ENCODE measurements at regions of chr18 and their contacts with region 1.

Region 1: GRCh38 chr18:12639990-12640880 is 17.7 kb downstream of the SPIRE1 start:
- DNase-seq: peak; percentile 79
- H3K4me3 ChIP-seq: no peak overlapping the region
- H3K27ac ChIP-seq: peak overlapping the region; percentile 74
- H3K4me1 ChIP-seq: peaks cover 38% of the 10 kb centered on the region
- H3K27me3 ChIP-seq: no peaks in the 10 kb centered on the region
- CTCF ChIP-seq: peak in 1 of 2 donors; percentile 17

Region 2: GRCh38 chr18:12597775-12598174 is 42.5 kb before region 1 on chr18:
- CTCF ChIA-PET with region 1: no interaction called
- dilution Hi-C with region 1: no loop called
- in situ Hi-C with region 1: no loop called
- intact Hi-C with region 1: loop called (anchors 2 kb)
- DNase-seq: peak; percentile 83
- H3K4me3 ChIP-seq: no peak overlapping the region
- H3K27ac ChIP-seq: peak overlapping the region; percentile 76
- H3K4me1 ChIP-seq: peaks cover 41% of the 10 kb centered on the region
- H3K27me3 ChIP-seq: no peaks in the 10 kb centered on the region
- CTCF ChIP-seq: no peak

Region 3: DNA sequence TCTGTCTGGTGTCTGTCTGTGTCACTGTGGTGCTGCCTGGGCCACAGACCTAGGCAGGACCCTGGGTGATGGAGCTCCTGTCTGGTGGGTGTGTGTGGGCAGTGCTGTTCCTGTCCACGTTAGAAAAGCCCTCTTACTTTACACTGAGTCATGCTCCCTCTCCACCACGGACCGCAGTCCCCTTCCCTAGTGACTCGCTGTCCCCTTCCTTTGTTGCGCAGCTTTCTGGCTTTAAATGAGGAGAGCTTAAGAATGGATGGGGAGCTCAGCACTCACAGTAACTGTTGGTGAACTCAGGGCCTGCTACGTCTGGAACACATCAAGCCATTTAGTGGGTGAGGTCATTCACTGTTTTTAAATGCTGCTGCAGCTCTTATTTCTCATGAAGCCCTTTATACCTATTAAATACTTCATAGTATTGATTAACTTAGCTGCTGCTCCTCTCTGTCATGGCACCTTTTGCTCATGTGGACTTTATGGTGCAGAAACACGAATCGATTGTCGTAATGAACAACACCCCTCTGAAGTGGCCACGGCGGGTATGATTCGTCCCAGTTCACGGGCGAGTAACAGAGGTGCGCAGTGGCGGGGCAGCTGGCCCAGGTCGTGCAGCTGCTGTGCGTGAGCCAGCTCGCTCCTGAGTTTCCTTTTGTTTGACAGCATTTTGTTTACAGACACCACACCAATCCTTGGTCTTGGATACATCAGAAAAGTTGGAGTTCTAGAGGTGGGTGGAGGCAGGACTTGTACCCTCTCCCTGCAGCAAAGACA is 678.7 kb after region 1 on chr18:
- CTCF ChIA-PET with region 1: no interaction called
- dilution Hi-C with region 1: no loop called
- in situ Hi-C with region 1: no loop called
- intact Hi-C with region 1: no loop called
- DNase-seq: no peak
- H3K4me3 ChIP-seq: no peak overlapping the region
- H3K27ac ChIP-seq: no peak overlapping the region
- H3K4me1 ChIP-seq: no peaks in the 10 kb centered on the region
- H3K27me3 ChIP-seq: no peaks in the 10 kb centered on the region
- CTCF ChIP-seq: no peak